Posterior vena cava (tissue), 2 donors: ENCODE measurements at regions of chr5 and their contacts with region 1.

Region 1: DNA sequence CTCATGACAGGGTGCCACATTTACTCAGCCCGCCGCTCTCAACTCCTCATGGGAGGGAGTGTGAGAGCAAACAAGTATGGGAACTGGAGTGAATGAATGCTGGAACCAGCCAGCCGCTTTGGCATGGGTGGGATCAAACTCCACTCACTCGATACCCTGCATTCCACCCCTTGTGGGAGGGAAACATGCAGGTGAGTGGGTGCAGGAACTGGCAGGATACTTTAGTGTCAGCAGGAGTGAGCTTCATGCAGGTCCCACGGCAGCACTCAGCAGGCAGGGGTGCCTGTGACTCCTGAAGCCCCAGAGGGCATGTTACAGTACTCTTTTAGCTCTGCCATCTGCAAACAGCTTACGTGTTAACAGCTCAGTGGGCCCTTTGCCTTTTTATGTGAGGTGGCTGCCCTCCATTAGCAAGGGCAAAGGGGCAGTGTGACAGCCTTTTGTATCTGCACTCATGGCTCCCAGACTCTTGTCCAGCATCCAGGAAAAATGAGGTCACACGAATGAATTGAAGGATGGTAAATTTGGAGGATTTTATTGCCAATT is 433.2 kb upstream of the NMUR2 start:
- DNase-seq: no peak

Region 2: GRCh38 chr5:152804179-152804578 is 34.1 kb before region 1 on chr5:
- intact Hi-C with region 1: loop called in 1 of 2 experiments (anchors 1 kb)
- DNase-seq: no peak